Activated CD4-positive, alpha-beta memory T cell treated with anti-CD3 and anti-CD28 coated beads for 36 hours (primary cell): ENCODE measurements at regions of chrX and their contacts with region 1.

Region 1: GRCh38 chrX:109840585-109840984 is 107.5 kb upstream of the ACSL4 start:
- DNase-seq: peak; percentile 18
- H3K4me3 Mint-ChIP-seq: no peak overlapping the region
- H3K27ac Mint-ChIP-seq: no peak overlapping the region
- H3K4me1 Mint-ChIP-seq: peaks cover 3% of the 10 kb centered on the region
- H3K27me3 Mint-ChIP-seq: no peaks in the 10 kb centered on the region

Region 2: DNA sequence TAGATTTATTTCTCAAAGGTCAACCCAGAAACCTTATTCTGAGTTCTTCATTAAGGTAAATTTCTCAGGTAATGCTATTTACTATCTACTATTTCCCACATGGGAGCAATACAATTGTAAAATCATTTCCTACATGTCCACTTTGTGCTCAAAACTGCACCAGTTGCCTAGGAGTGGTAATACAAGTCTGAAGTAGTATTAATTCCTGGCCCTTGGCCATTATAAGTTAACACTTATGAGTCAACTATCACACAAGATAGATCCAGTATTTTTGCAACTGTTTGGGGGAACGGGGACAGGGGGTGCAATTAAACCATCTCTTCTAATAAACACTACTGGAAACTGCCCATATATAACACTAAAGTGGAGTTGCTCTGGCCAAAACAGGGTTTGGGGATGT is 156.4 kb before region 1 on chrX:
- CTCF ChIA-PET with region 1: no interaction called
- POLR2A ChIA-PET with region 1: no interaction called
- intact Hi-C with region 1: loop called (anchors 5 kb)
- DNase-seq: no peak
- H3K4me3 Mint-ChIP-seq: no peak overlapping the region
- H3K27ac Mint-ChIP-seq: no peak overlapping the region
- H3K4me1 Mint-ChIP-seq: peaks cover 18% of the 10 kb centered on the region
- H3K27me3 Mint-ChIP-seq: no peaks in the 10 kb centered on the region

Region 3: GRCh38 chrX:109782994-109783700 is 57.4 kb before region 1 on chrX:
- CTCF ChIA-PET with region 1: no interaction called
- POLR2A ChIA-PET with region 1: no interaction called
- intact Hi-C with region 1: loop called (anchors 1 kb)
- DNase-seq: peak; percentile 16
- H3K4me3 Mint-ChIP-seq: peak overlapping the region; percentile 34
- H3K27ac Mint-ChIP-seq: peak overlapping the region; percentile 69
- H3K4me1 Mint-ChIP-seq: peaks cover 13% of the 10 kb centered on the region
- H3K27me3 Mint-ChIP-seq: no peaks in the 10 kb centered on the region

Region 4: DNA sequence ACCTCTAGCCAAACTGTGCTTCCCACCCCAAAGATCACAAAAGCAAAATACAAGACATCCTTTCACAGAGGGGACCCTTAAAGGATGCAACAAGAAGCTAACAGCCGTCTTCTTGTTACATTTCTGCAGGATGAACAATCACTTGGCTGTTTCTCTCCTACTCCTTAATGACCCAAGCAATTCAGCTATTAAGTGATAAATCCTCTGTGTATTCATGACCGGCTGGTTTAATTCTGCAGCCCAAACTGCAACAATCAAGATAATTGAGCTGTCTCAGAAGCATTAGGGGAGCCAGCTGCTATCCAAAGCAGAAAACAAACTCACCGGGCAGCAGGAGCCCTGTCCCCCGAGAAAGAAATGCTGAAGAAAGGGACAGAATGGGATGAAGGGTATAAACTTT is 21.6 kb before region 1 on chrX:
- CTCF ChIA-PET with region 1: no interaction called
- POLR2A ChIA-PET with region 1: no interaction called
- intact Hi-C with region 1: no loop called
- DNase-seq: no peak
- H3K4me3 Mint-ChIP-seq: no peak overlapping the region
- H3K27ac Mint-ChIP-seq: no peak overlapping the region
- H3K4me1 Mint-ChIP-seq: no peaks in the 10 kb centered on the region
- H3K27me3 Mint-ChIP-seq: no peaks in the 10 kb centered on the region